Right ventricle myocardium inferior (tissue), 1 donor: ENCODE measurements at regions of chr9 and their contacts with region 1.

Region 1: GRCh38 chr9:34546834-34547827 is 24.3 kb upstream of the ENHO start:
- DNase-seq: peak; percentile 71
- ATAC-seq: peak; percentile 72

Region 2: DNA sequence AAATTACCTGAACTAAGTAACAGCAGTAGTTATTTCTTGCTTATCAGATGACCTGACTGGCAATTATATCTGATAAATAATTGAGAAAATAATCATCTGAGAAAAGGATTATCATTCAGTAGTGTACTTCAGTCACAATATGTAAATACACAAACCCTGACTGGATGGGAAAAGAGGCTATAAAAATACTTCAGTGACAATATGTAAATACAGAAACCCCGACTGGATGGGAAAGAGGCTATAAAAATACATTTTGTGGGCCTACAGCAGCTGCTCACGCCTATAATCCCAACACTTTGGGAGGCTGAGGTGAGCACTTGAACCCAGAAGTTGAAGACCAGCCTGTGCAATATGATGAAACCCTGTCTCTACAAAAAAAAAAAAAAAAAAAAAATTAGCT is 509.5 kb before region 1 on chr9:
- intact Hi-C with region 1: no loop called
- DNase-seq: no peak
- ATAC-seq: no peak

Region 3: GRCh38 chr9:34332076-34332964 is 214.8 kb before region 1 on chr9:
- intact Hi-C with region 1: loop called (anchors 1 kb)
- DNase-seq: no peak
- ATAC-seq: no peak

Region 4: GRCh38 chr9:34403554-34404380 is 143.4 kb before region 1 on chr9:
- intact Hi-C with region 1: loop called (anchors 5 kb)
- DNase-seq: no peak
- ATAC-seq: peak; percentile 52

Region 5: DNA sequence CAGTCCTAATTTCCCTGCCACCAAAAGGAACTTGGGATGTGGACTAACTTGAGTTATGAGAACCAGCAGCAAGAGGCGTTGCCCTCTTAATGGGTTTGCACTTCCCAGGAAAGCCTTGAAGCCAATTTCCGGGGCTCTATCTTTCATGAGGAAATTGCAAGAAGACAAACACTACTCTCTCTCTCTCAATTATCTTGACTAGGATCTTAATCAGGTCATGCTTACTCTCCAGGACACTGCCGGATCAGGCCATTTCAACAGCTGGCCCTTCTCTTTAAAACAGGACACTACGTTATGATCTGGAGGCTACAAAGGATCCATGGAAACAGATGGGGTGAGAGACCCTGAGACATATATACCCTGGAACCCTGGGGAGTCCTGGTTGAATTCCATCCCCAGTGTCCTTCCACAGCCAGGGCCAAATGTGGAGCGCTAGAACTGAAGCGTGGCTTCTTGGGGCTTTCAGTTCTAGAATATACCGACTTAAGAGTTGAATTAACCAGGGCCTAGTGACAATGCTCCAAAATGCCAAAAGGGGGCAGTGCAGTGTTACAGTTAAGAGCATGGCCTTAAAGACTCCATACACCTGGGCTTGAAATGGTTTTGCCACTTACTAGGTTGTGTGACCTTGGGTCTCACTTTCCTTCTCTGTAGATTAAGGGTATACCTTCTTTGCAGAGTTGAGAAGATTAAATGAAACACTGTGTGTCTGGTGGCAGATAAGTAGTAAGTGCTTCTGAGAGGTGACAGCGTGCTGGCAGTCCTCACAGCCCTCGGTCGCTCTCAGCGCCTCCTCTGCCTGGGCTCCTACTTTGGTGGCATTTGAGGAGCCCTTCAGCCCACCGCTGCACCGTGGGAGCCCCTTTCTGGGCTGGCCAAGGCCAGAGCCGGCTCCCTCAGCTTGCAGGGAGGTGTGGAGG is 109.9 kb before region 1 on chr9:
- intact Hi-C with region 1: loop called (anchors 5 kb)
- DNase-seq: no peak
- ATAC-seq: peak; percentile 73

Region 6: GRCh38 chr9:34570376-34570775 is 23.2 kb after region 1 on chr9:
- intact Hi-C with region 1: no loop called
- DNase-seq: no peak
- ATAC-seq: peak; percentile 20

Region 7: DNA sequence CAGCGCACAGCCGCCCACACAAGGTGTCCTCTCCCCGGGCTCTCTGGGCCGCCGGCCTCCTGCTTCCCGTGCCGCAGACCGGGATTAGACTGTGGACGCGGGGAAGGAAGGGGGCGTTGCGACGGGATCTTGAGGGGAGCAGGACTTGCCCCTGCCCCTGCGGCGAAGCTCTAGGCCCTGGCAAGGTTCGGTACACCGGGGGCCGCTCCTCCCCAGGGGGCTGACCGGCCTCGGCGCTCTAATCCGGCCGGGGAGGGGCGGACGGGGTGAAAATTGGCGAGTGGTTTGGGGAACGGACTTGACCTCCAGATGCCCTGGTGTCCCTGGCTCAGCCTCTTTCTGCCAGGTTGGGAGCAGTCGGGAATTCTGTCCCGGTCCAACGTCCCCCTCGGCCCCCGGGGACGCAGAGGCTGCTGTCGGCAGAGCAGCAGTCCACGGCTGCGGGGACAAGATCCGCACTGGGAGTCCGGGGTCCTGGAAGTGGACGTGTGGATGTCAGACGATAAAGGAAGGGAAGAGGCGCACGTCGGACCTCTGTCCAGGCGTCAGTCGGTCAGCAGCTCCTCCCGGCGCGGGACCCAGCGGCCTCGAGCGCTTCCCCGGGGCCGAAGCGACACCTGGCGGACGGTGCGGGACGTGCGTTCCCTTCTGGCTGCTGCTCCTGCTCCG is 44.3 kb after region 1 on chr9:
- intact Hi-C with region 1: loop called (anchors 1 kb)
- DNase-seq: peak; percentile 93
- ATAC-seq: peak; percentile 74

Region 8: DNA sequence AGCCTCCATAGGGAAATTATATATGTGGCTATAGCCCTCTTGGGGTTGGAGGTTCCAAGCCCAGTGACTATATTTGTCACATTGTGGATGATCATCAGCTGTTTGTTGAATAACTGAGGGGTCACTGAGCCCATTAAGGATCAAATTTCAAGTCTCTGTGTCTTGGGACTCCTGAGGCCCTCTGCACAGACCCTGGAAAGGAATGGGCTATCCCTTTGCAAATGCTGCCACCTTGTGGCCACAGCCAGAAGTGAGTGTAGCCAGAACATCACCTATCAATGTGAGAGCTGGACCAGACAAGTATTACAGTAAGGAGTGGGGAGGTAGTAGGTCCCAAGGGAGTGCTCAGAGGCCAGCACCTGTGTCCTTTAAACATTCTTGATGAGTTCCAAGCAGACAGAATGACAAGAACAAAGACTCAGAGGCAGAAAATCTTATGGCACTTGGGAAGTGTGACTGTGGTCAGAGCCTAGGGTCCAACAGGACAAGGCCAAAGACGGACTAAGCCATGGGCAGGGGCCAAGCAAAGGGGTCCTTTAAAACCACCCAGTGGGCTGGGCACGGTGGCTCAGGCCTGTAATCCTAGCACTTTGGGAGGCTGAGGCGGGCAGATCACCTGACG is 56.6 kb after region 1 on chr9:
- intact Hi-C with region 1: loop called (anchors 2 kb)
- DNase-seq: peak; percentile 90
- ATAC-seq: peak; percentile 84